H1 (cell line): ENCODE measurements at regions of chr20 and their contacts with region 1.

Region 1: DNA sequence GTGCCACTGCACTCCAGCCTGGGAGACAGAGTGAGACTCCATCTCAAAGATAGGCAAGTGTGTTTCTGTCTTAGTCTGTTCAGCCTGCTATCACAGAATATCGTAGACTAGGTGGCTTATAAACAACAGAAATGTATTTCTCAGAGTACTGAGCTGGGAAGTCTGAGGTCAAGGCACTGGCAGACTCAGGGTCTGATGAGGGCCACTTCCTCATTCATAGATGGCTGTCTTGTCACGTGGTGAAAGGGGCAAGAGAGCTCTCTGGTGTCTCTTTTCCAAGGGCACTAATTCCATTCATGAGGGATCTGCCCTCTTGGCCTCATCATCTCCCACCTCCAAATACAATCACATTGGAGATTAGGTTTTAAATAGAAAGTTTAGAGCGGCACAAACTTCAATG is 95.6 kb upstream of the PHACTR3 start:
- DNase-seq: no peak
- H3K4me3 ChIP-seq: no peak overlapping the region
- H3K27ac ChIP-seq: no peak overlapping the region
- H3K4me1 ChIP-seq: no peaks in the 10 kb centered on the region
- H3K27me3 ChIP-seq: no peaks in the 10 kb centered on the region
- CTCF ChIP-seq: no peak
- EP300 ChIP-seq: no peak
- POLR2A ChIP-seq: no peak
- RAD21 ChIP-seq: no peak

Region 2: GRCh38 chr20:59518881-59519688 is 10.4 kb after region 1 on chr20:
- CTCF ChIA-PET with region 1: interaction called, 24 read pairs
- POLR2A ChIA-PET with region 1: no interaction called
- DNase-seq: peak in 1 of 2 experiments; percentile 62
- H3K4me3 ChIP-seq: no peak overlapping the region
- H3K27ac ChIP-seq: no peak overlapping the region
- H3K4me1 ChIP-seq: no peaks in the 10 kb centered on the region; a peak in 1 of 7 replicates
- H3K27me3 ChIP-seq: peaks cover 0 to 4% (median 0%) of the 10 kb centered on the region in 4 experiments; a peak in 2 of 7 replicates
- CTCF ChIP-seq: peak; percentile 67 to 84 (median 79)
- EP300 ChIP-seq: no peak
- POLR2A ChIP-seq: no peak
- RAD21 ChIP-seq: peak in 1 of 2 experiments; percentile 55; a peak in 3 of 4 replicates